Gastrocnemius medialis (tissue), 4 donors: ENCODE measurements at regions of chr4 and their contacts with region 1.

Region 1: DNA sequence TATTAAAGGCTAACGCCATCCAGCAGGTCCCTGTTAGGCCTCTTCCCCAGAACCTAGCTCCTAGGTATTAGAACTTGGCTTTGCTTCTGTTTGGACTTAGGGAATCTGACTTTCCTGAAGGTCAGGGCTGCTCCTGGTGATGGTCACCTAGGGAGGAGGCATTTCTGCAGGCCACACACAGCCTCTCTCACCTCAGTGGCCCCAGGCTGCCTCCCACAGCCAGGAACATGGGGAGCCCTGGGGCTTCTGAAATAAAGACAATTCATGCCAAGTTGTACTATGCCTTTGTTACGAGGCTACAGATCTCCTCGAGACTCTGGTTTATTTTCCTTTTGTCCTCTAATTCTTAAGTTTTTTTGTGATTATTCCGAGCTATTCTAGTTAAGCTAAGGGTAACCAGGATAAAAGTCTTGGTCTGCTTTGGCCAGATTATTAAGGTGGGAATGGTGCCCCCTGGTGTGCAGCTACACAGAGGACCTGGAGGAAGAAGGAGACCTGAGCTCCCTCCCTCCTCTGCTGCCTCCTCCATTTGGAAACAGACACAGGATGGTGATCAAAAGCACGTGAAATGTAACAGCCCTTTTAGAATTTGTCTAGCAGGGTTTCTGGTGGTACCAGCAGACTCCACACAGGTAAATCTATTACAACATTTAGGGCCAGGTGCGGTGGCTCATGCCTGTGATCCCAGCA is 131.0 kb downstream of the DCLK2 start:
- DNase-seq: no peak
- ATAC-seq: no peak
- H3K4me3 ChIP-seq: no peak overlapping the region
- H3K27ac ChIP-seq: no peak overlapping the region
- H3K4me1 ChIP-seq: no peaks in the 10 kb centered on the region
- H3K27me3 ChIP-seq: no peaks in the 10 kb centered on the region
- CTCF ChIP-seq: peak in 4 of 5 experiments; percentile 28 to 46 (median 38)
- POLR2A ChIP-seq: no peak

Region 2: GRCh38 chr4:150010525-150011126 is 198.7 kb before region 1 on chr4:
- in situ Hi-C with region 1: loop called (anchors 10 to 25 kb)
- intact Hi-C with region 1: loop called (anchors 1 kb)
- DNase-seq: no peak
- ATAC-seq: no peak
- H3K4me3 ChIP-seq: no peak overlapping the region
- H3K27ac ChIP-seq: no peak overlapping the region
- H3K4me1 ChIP-seq: peaks cover 0 to 4% of the 10 kb centered on the region in 2 donors
- H3K27me3 ChIP-seq: no peaks in the 10 kb centered on the region
- CTCF ChIP-seq: peak in 3 of 5 experiments; percentile 22 to 47 (median 32)
- POLR2A ChIP-seq: no peak

Region 3: GRCh38 chr4:150078637-150079581 is 130.4 kb before region 1 on chr4:
- in situ Hi-C with region 1: no loop called
- intact Hi-C with region 1: loop called (anchors 10 kb)
- DNase-seq: no peak
- ATAC-seq: peak; percentile 34 to 53
- H3K4me3 ChIP-seq: peak overlapping the region; percentile 59 to 74 (median 68)
- H3K27ac ChIP-seq: peak overlapping the region; percentile 40 to 64 (median 56)
- H3K4me1 ChIP-seq: peaks cover 0 to 4% of the 10 kb centered on the region in 2 donors
- H3K27me3 ChIP-seq: peaks cover 0 to 5% (median 2%) of the 10 kb centered on the region in 3 donors
- CTCF ChIP-seq: no peak
- POLR2A ChIP-seq: no peak

Region 4: DNA sequence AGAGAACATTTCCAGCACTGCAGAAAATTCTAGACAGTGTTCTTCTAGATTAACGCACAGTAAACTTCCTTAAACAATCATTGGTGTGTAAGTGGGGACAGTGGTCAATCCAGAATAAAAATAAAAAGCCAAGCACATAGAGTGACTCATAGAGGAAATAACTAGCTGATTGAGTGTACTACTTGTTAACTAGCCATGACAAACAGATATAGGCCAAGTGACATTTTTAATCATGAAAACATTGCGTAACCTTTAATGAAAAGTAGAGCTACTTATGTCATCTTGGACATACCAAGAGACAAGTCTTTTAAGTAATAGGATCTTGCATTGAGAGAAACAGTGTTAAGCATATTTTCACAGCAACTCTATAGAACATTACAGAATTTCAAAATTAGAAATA is 138.8 kb after region 1 on chr4:
- in situ Hi-C with region 1: no loop called
- intact Hi-C with region 1: no loop called
- DNase-seq: no peak
- ATAC-seq: no peak
- H3K4me3 ChIP-seq: no peak overlapping the region
- H3K27ac ChIP-seq: no peak overlapping the region
- H3K4me1 ChIP-seq: no peaks in the 10 kb centered on the region
- H3K27me3 ChIP-seq: no peaks in the 10 kb centered on the region
- CTCF ChIP-seq: no peak
- POLR2A ChIP-seq: no peak